ENCODE measurements at regions of chrX and their contacts with region 1.

Region 1: DNA sequence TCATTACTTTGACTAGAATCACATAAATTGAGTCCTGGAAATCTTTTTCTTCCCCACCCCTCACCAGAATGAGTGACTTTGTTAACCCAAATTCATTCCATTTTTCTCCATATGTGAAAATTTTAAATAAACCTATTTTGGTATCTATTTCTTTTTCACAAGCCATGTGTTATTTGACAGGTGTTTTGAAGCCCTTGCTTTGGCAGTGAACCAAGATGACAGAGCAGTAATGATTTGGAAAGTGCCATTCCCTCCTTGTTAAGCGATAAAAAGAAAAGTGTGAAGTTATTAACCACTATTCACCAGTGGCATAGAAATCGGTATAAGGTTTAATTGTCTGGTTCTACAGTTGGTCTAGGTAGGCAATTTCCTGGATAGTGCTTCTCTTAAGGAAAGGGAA is 66.1 kb downstream of the POLA1 start:
- DNase-seq: no peak
- H3K4me3 Mint-ChIP-seq: no peak overlapping the region
- H3K27ac Mint-ChIP-seq: no peak overlapping the region
- H3K4me1 Mint-ChIP-seq: peaks cover 6% of the 10 kb centered on the region
- H3K27me3 Mint-ChIP-seq: no peaks in the 10 kb centered on the region

Region 2: GRCh38 chrX:25004485-25005032 is 244.8 kb after region 1 on chrX:
- intact Hi-C with region 1: loop called (anchors 10 kb)
- DNase-seq: no peak
- H3K4me3 Mint-ChIP-seq: no peak overlapping the region
- H3K27ac Mint-ChIP-seq: no peak overlapping the region
- H3K4me1 Mint-ChIP-seq: no peaks in the 10 kb centered on the region
- H3K27me3 Mint-ChIP-seq: peaks cover 40% of the 10 kb centered on the region

Measured in activated T-helper 1 cell treated with anti-CD3 and anti-CD28 coated beads, Interleukin-12 subunit alpha, Interleukin-12 subunit beta, Interleukin-2, Interleukin-4 antibody, amounts not matched to agents 30 ng/mL and 10 ng/mL and 1 ng/mL, durations not matched to agents 14 hours and 24 hours and 36 hours (primary cell).